BJ (cell line): ENCODE measurements at regions of chr10 and their contacts with region 1.

Region 1: DNA sequence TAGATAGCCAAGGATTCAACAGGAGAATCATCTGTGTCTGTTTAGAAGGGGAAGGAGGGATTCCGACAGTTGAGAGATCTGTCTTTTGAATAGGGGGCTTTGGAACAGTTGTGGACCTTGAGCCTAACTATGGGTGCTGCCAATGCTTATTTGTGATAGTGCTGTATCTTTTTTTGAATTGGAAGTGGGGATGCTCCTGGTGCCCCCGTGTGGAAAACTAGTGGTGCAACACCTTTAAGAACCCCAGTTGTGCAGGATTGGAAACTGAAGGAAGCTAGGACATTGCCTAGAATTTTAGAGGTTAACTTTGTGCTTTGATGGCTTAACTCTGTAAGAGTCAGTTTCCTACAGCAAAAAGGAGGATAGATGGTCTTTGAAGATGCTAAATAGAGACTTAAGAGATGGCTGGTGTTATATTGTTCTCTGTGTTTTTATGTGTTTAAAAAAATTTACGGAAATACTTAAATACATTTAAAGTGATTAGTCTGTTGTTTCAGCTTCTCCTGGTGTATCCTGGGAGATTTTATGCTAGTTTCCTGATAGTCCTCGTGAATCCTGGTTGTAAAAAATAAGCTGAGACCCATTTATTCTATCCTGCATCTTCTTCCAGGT is 69.3 kb downstream of the AP3M1 start:
- DNase-seq: no peak
- H3K4me3 ChIP-seq: no peak overlapping the region
- H3K27me3 ChIP-seq: no peaks in the 10 kb centered on the region
- CTCF ChIP-seq: peak; percentile 84

Region 2: DNA sequence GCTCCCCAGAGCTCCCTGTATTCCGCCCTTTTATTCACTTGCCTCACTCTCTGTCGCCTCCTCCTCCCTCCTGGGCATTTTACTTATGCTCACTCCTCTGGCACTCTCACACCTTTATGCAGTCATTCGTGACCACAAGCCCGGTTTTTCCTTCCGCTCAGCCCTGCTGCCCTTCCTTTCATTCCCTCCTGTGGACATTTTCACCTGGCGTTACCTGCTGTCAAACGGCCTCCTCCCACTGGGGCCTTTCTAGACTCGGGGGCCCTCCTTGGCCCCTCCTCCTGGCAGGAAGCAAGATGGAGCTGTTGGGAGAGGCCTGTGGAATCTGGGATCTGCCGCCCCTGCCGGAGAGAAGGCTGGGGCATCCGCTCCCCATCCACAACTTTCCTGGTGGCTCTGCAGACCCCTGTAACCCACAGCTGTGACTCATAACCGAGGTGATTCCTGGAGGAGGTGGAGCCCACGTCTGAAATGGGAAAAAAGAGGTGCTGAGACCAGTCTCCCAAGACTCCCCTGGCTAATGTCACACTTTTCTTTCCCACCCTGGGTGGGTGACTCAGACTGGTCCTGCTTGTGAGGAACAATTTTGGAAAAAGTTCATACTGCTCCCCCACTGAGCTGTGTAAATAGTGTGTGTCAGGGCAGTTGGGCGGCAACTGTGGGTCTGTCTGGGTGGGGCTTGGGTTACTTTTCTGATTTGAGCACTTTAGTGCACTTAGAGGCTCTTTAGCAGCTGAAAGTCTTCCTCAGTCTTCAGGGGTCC is 82.2 kb before region 1 on chr10:
- CTCF ChIA-PET with region 1: interaction called, 10 read pairs
- POLR2A ChIA-PET with region 1: no interaction called
- DNase-seq: peak; percentile 47
- H3K4me3 ChIP-seq: peak overlapping the region; percentile 95
- H3K27me3 ChIP-seq: no peaks in the 10 kb centered on the region
- CTCF ChIP-seq: peak; percentile 77

Region 3: GRCh38 chr10:74097776-74098175 is 16.5 kb after region 1 on chr10:
- CTCF ChIA-PET with region 1: interaction called, 10 read pairs
- POLR2A ChIA-PET with region 1: no interaction called
- DNase-seq: no peak
- H3K4me3 ChIP-seq: no peak overlapping the region
- H3K27me3 ChIP-seq: no peaks in the 10 kb centered on the region
- CTCF ChIP-seq: no peak

Region 4: DNA sequence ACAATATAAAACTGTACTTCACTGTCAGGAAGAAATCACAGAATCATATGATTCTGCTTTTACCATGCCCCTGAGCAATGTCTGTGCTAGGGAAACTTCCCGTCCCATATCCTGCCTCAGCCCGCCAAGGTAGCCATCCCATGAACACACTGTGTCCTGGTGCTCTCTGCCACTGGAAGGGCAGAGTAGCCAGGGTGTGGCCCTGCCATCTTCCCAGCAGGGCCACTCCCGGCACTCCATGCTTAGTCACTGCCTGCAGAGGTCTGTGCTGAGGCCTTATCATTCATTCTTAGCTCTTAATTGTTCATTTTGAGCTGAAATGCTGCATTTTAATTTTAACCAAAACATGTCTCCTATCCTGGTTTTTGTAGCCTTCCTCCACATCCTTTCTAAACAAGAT is 37.5 kb after region 1 on chr10:
- CTCF ChIA-PET with region 1: no interaction called
- POLR2A ChIA-PET with region 1: no interaction called
- DNase-seq: no peak
- H3K4me3 ChIP-seq: no peak overlapping the region
- H3K27me3 ChIP-seq: no peaks in the 10 kb centered on the region
- CTCF ChIP-seq: no peak

Region 5: DNA sequence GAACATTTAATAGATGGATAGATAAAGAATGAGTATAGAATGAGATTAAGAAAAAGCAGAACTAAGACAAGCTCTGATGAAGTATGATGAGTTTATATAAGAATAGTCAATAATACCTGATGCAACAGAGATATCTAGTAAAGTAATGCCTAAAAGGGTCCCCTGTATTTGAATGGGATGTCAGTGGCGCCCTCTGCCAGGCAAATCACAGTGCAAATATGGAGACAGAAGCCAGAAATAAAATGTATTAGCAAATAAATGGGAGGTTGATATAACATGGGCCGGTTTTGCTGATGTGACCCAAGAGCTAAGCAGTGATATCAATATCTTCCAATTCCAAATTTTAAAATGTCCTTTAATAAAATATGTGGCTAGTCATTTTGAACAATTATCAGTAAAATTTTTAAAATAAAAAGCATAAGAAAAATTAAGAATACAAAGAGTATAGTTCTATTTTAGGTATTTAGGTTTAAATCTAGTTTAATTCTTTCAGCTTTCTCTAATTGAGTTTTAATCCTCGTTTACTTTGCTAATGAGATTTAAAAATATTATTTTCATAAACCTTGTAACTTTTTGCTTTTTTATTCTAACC is 132.4 kb after region 1 on chr10:
- CTCF ChIA-PET with region 1: no interaction called
- POLR2A ChIA-PET with region 1: no interaction called
- DNase-seq: no peak
- H3K4me3 ChIP-seq: no peak overlapping the region
- H3K27me3 ChIP-seq: no peaks in the 10 kb centered on the region
- CTCF ChIP-seq: peak; percentile 63